Adrenal gland (tissue), 19 donors: ENCODE measurements at regions of chr1 and their contacts with region 1.

Region 1: GRCh38 chr1:88180449-88181108 is 503.5 kb upstream of the PKN2 start:
- DNase-seq: peak; percentile 70 to 84 (median 77)
- H3K4me3 ChIP-seq: no peak overlapping the region
- H3K27ac ChIP-seq: no peak overlapping the region
- H3K4me1 ChIP-seq: peaks cover 0 to 4% of the 10 kb centered on the region in 2 donors
- H3K27me3 ChIP-seq: no peaks in the 10 kb centered on the region
- CTCF ChIP-seq: peak; percentile 72 to 93 (median 82)
- POLR2A ChIP-seq: no peak

Region 2: DNA sequence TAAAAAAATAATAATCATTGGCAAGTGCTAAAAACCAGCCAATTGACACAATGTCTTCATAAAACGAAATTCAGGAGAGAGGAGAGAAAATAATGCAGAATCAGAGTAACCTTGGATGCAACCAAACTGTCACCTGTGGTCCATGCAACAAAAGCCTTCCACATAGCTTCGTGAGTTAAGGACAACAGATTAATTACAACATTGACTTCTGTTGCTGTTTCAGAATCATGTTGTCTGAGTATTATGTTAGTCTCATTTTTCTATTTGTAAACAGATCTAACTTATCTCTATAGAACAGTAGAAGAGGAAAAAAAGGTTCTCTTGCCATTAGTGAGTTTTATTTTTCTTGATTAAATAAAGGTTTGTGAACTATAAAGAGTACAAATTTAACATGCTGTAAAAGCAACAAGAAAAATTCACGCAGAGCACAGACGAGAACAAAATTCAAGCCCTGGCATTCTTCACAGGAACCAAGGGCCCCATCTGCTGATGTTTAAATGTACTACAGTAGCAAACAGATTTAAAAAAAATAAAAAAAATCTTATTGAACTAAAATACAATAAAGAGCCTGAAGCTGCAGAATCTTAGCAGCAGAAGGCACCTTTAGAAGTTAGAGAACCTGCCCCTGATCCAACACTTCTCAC is 122.4 kb after region 1 on chr1:
- intact Hi-C with region 1: loop called (anchors 5 to 10 kb)
- DNase-seq: peak; percentile 23 to 50 (median 28)
- H3K4me3 ChIP-seq: no peak overlapping the region
- H3K27ac ChIP-seq: no peak overlapping the region
- H3K4me1 ChIP-seq: peaks cover 0 to 5% of the 10 kb centered on the region in 2 donors
- H3K27me3 ChIP-seq: no peaks in the 10 kb centered on the region
- CTCF ChIP-seq: peak; percentile 35 to 69 (median 58)
- POLR2A ChIP-seq: no peak